Activated CD4-positive, alpha-beta T cell treated with anti-CD3 and anti-CD28 coated beads, Interleukin-2, amount 10 ng/mL, durations not matched to agents 24 days and 14 days (primary cell): ENCODE measurements at regions of chr10 and their contacts with region 1.

Region 1: DNA sequence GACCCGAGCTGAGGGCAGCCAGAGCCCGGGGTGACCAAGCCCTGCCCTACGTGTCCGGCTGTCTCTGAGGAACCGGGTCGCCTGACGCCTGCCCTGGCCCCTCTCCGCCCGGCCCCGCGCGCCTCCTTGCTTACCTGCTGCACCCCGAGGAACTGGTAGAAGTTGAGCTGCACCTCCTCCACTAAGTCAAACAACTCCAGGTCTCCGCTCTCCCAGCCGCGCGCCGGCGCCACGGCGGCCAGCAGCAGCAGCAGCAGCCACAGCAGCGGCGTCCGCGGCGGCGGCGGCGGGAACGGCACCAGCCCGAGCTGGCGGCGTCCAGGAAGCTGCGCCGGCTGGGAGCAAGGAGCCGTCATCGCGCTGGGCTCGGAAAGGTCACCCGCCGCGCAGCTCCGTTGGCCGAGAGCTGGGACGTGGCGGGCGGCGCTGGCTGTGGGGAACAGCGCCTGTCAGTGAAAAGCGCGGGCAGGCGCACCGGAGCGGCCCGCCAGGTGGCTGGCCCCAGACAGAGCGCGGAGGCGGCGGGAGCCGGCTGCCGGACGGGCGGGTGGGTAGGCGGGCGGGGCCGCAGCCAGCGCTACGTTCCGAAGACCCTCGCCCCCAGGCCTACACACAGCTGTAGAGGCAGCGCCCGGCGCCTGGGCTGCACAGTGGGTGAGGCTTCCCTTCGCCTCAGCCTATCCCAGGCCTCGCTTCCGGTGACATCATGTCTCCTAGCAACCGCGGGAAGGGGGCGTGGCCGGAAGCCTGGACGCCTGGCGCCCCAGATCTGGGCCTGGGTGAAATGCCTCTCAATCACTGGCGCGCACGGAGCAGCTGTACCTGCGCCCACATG is at the start of gene DNAJC1:
- DNase-seq: peak; percentile 100
- H3K4me3 Mint-ChIP-seq: peak within 1 kb of the TSS; percentile 93
- H3K27ac Mint-ChIP-seq: peak within 1 kb of the TSS; percentile 96
- H3K4me1 Mint-ChIP-seq: peaks cover 26% of the 10 kb centered on the region
- H3K27me3 Mint-ChIP-seq: peaks cover 18% of the 10 kb centered on the region
- total RNA-seq, gene DNAJC1: 22.1 and 22.4 TPM in 2 replicates

Region 2: DNA sequence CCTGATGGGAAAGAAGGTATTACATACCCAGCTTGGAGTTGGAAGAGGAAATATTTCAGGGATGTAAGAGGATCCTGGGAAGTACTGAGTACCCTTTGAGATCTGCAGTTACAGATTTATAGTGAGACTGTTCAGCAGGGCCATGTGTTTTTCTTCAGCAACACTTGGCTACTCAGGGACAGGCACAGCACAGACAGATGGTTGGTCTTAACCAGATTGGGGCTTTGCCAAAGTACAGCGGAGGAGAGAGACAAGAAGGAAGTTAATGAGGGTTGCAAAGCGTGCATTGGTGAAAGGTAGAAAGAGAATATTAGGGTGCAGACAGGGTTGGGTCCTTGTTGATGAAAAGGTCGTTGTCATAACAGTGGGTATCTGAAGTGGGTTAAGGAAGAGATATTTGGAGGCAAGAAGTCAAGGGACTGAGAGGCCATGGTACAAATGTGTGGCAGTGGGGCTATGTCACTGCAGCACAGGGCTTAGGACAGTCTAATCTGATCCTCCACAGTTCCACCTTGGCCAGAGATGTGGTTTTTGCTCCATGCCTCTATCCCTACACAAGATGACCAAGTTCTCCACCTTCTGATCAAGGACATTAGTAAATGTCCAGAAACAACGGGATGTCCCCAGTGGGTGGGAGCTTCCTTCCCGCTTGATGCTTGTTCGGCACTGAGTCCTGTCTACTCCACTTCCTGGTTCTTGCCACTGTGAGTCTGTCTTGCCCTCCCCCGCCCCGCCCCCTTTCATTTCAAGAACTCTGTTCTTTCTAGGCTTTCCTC is 19.1 kb after region 1 on chr10:
- intact Hi-C with region 1: loop called (anchors 1 kb)
- DNase-seq: peak; percentile 78
- H3K4me3 Mint-ChIP-seq: peak overlapping the region; percentile 73
- H3K27ac Mint-ChIP-seq: peak overlapping the region; percentile 82
- H3K4me1 Mint-ChIP-seq: peaks cover 15% of the 10 kb centered on the region
- H3K27me3 Mint-ChIP-seq: peaks cover 9% of the 10 kb centered on the region

Region 3: DNA sequence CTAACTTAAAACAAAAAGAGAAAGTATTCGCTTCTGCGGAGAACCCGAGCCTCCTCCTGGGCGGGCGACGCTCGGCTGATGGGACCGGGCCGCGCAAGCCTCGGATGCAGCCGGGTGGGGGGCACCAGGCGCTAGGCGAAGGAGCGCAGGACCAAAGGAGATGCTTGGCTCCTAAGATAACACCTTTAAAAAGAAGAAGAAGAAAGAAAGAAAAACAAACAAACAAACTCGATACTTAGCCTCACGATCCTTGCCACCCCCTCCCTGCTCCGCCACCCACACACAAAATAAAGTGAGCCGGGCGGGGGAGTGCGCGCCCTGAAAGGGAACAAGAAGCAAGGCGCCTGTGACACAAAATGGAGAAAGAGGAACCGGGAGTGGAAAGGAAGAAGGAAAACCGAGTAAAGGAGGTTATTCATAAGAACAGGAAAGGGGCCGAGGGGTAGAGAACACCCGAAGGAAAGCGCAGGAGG is 248.5 kb after region 1 on chr10:
- intact Hi-C with region 1: loop called (anchors 2 kb)
- DNase-seq: peak; percentile 91
- H3K4me3 Mint-ChIP-seq: peak overlapping the region; percentile 91
- H3K27ac Mint-ChIP-seq: peak overlapping the region; percentile 98
- H3K4me1 Mint-ChIP-seq: peaks cover 31% of the 10 kb centered on the region
- H3K27me3 Mint-ChIP-seq: peaks cover 14% of the 10 kb centered on the region

Region 4: GRCh38 chr10:22316285-22317120 is 313.2 kb after region 1 on chr10 and contains the start of gene COMMD3:
- intact Hi-C with region 1: loop called (anchors 2 kb)
- DNase-seq: peak; percentile 95
- H3K4me3 Mint-ChIP-seq: peak within 1 kb of the TSS; percentile 87
- H3K27ac Mint-ChIP-seq: peak within 1 kb of the TSS; percentile 94
- H3K4me1 Mint-ChIP-seq: peaks cover 29% of the 10 kb centered on the region
- H3K27me3 Mint-ChIP-seq: no peaks in the 10 kb centered on the region
- total RNA-seq, gene COMMD3: 76.7 and 79.7 TPM in 2 replicates

Region 5: GRCh38 chr10:23095404-23095965 is 1092.2 kb after region 1 on chr10 and contains the start of gene MSRB2:
- intact Hi-C with region 1: loop called (anchors 5 kb)
- DNase-seq: peak; percentile 90
- H3K4me3 Mint-ChIP-seq: peak within 1 kb of the TSS; percentile 89
- H3K27ac Mint-ChIP-seq: peak within 1 kb of the TSS; percentile 93
- H3K4me1 Mint-ChIP-seq: peaks cover 40% of the 10 kb centered on the region
- H3K27me3 Mint-ChIP-seq: peaks cover 18% of the 10 kb centered on the region
- total RNA-seq, gene MSRB2: 3.3 and 3.9 TPM in 2 replicates